ENCODE measurements at regions of chr10 and their contacts with region 1.

Region 1: GRCh38 chr10:50224330-50224952 is 26.9 kb downstream of the ASAH2 start:
- DNase-seq: peak; percentile 27 to 72
- ATAC-seq: peak; percentile 97 to 99
- H3K4me3 ChIP-seq: no peak overlapping the region
- H3K27ac ChIP-seq: no peak overlapping the region
- H3K4me1 ChIP-seq: no peaks in the 10 kb centered on the region
- CTCF ChIP-seq: peak; percentile 72
- EP300 ChIP-seq: no peak
- POLR2A ChIP-seq: no peak
- RAD21 ChIP-seq: peak; percentile 76 to 79

Region 2: GRCh38 chr10:50234486-50234885 is 10.0 kb after region 1 on chr10:
- CTCF ChIA-PET with region 1: interaction called, 11 read pairs
- POLR2A ChIA-PET with region 1: no interaction called
- DNase-seq: no peak
- ATAC-seq: no peak
- H3K4me3 ChIP-seq: no peak overlapping the region
- H3K27ac ChIP-seq: no peak overlapping the region
- H3K4me1 ChIP-seq: no peaks in the 10 kb centered on the region
- CTCF ChIP-seq: no peak
- EP300 ChIP-seq: no peak
- POLR2A ChIP-seq: no peak
- RAD21 ChIP-seq: no peak

Measured in A549 (cell line).